ENCODE measurements at regions of chr10 and their contacts with region 1.

Region 1: DNA sequence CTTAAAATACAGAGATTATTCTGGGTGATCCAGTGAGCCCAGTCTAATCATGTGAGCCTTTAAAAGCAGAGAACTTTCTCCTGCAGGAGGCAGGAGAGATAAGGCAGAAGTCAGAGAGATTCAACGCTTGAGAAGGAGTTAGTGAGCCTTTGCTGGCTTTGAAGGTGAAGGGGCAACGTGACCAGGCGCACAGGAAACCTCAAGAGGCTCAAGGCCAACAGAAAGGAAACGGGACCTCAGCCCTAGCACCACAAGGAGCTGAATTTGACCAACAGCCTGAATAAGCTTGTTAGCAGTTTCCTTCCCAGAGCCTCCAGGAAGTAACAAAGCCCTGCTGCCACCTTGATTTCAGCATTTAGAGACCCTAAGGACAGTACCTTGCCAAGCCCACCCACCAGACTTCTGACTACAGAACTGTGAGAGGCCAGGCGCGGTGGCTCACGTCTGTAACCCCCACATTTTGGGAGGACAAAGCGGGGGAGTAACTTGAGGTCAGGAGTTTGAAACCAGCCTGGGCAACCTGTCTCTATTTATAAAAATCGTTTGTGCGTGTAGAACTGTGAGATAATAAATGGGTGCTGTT is 87.3 kb upstream of the KAT6B start:
- DNase-seq: peak; percentile 71
- ATAC-seq: peak; percentile 64
- H3K4me3 ChIP-seq: no peak overlapping the region
- H3K27ac ChIP-seq: no peak overlapping the region
- H3K4me1 ChIP-seq: peaks cover 10% of the 10 kb centered on the region
- H3K27me3 ChIP-seq: no peaks in the 10 kb centered on the region
- CTCF ChIP-seq: peak; percentile 85

Region 2: GRCh38 chr10:74598891-74599566 is 140.0 kb before region 1 on chr10:
- CTCF ChIA-PET with region 1: no interaction called
- POLR2A ChIA-PET with region 1: no interaction called
- intact Hi-C with region 1: loop called (anchors 5 kb)
- DNase-seq: peak; percentile 74
- ATAC-seq: peak; percentile 89
- H3K4me3 ChIP-seq: no peak overlapping the region
- H3K27ac ChIP-seq: no peak overlapping the region
- H3K4me1 ChIP-seq: peaks cover 12% of the 10 kb centered on the region
- H3K27me3 ChIP-seq: no peaks in the 10 kb centered on the region
- CTCF ChIP-seq: no peak

Measured in PC-3 (cell line).